ENCODE measurements at regions of chr2 and their contacts with region 1.

Region 1: GRCh38 chr2:101124643-101125366 is 26.4 kb downstream of the TBC1D8 start:
- DNase-seq: peak; percentile 98
- H3K4me3 ChIP-seq: peak overlapping the region in 1 of 3 experiments; percentile 24
- H3K27ac ChIP-seq: peak overlapping the region; percentile 99
- H3K4me1 ChIP-seq: peaks cover 66% of the 10 kb centered on the region
- H3K27me3 ChIP-seq: no peaks in the 10 kb centered on the region
- CTCF ChIP-seq: no peak
- POLR2A ChIP-seq: peak; percentile 51

Region 2: DNA sequence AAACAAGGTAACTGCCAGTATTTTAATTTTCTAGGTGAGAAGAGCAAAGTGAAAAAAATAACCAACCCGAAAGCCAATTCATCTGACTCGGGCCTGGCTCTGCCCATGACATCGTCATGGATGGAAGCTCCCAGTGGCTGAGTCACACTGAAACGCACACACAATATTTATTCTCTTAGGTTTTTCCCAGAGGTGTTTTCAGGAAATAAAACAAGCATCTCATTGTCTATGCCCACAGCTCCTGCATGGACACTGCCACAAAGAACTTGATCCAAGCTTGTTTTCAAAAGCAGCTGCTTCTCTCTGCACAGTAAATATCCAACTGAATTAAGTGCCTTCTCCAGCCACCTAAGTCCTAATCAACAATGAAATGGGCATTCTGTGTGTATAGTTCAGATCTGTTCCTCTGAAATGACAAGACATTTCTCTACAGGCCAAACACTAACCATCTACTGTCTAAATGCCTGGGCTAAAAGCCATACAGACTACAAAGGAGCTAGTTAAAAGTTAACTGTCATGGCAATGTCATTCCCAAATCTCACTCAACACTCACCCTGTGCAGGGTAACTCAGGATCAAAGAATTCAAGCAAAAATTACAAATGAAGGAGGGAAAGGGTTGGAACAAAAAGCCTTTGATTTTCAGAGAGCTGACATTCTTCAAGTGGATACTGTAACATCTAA is 59.8 kb before region 1 on chr2:
- CTCF ChIA-PET with region 1: no interaction called
- POLR2A ChIA-PET with region 1: no interaction called
- dilution Hi-C with region 1: loop called (anchors 5 kb)
- intact Hi-C with region 1: loop called (anchors 5 kb)
- DNase-seq: peak; percentile 68
- H3K4me3 ChIP-seq: no peak overlapping the region
- H3K27ac ChIP-seq: no peak overlapping the region
- H3K4me1 ChIP-seq: peaks cover 22% of the 10 kb centered on the region
- H3K27me3 ChIP-seq: no peaks in the 10 kb centered on the region
- CTCF ChIP-seq: no peak
- POLR2A ChIP-seq: no peak

Region 3: DNA sequence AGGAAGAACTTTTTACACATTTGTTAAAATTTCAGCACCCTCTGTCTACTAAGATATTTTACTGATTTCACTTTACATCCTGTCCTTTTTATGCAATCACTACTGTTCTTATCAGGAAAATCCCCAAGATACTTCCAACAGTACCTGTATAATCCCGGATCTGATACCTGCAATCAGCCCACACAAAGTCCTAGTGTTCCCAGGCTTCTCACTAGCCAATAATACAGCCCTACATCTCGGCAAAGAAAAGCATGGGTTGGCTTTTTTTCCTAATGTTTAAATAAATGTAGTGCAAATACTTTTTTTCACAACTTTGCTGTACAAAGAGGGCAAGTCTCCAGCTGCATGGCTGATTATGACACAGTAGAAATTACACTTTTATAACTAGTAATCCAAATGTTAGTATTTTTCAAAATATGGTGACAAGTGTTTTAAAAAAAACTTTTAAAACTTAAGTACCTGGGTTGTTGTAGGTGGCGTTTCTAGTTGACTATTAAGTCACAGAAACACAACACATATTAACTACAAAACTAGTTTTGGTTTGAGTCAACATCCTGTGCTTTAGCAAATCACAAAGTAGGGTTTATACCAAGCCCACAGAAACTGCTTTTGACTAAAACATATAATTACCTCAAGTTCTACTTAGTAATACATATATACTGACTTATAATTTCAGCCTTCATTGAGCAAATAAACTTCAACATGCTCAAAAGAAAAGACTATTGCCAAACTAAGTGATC is 147.4 kb after region 1 on chr2:
- CTCF ChIA-PET with region 1: no interaction called
- POLR2A ChIA-PET with region 1: no interaction called
- dilution Hi-C with region 1: no loop called
- intact Hi-C with region 1: no loop called
- DNase-seq: no peak
- H3K4me3 ChIP-seq: no peak overlapping the region
- H3K27ac ChIP-seq: no peak overlapping the region
- H3K4me1 ChIP-seq: no peaks in the 10 kb centered on the region
- H3K27me3 ChIP-seq: no peaks in the 10 kb centered on the region
- CTCF ChIP-seq: no peak
- POLR2A ChIP-seq: no peak

Region 4: DNA sequence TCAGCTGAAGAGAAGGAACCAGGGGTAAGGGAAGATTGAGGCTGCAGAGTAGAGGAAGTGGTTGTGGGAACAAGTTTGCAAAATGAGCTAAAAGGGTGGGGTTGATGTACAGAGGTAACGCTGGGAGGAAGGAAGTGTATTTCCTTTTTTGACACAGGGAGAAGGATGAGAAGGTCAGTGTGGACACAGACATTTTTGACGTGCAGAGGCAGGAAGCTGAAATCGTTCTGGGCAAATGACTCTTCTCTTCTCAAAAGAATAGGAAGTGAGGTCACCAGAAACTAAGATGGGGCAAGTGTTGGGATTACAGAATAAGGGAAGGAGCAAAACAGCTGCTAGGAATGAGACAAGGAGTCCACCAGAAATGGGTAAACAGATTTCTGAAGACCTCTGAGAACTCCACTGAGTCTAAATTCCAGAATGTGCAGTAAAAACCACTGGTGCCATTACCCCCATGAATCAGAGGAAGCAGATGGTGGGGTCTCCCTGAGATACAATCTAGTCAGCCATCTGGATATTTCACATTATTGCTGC is 203.7 kb after region 1 on chr2:
- CTCF ChIA-PET with region 1: no interaction called
- POLR2A ChIA-PET with region 1: no interaction called
- dilution Hi-C with region 1: no loop called
- intact Hi-C with region 1: loop called (anchors 2 kb)
- DNase-seq: peak; percentile 98
- H3K4me3 ChIP-seq: peak overlapping the region in 1 of 3 experiments; percentile 1
- H3K27ac ChIP-seq: peak overlapping the region; percentile 95
- H3K4me1 ChIP-seq: peaks cover 37% of the 10 kb centered on the region
- H3K27me3 ChIP-seq: no peaks in the 10 kb centered on the region
- CTCF ChIP-seq: no peak
- POLR2A ChIP-seq: peak; percentile 82